ENCODE measurements at regions of chrX and their contacts with region 1.

Region 1: DNA sequence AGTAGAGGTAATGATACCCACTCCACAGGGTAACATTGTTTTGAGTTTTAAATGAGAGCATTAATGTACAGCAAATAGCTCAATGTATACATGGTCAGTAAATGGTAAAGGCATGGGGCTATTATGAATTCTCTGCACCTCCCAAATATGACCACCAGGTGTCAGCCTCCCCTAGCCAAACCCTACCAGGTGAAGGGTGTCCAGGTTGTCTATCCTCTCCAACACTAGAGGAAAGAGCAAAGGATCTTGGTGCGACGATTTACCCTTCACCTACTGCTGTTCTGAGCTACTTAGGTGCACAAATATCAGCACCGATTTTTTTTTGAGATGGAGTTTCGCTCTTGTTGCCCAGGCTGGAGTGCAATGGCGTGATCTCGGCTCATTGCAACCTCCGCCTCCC is 26.5 kb upstream of the XIAP start:
- DNase-seq: peak; percentile 63 to 73
- H3K4me3 ChIP-seq: no peak overlapping the region
- H3K4me3 Mint-ChIP-seq: no peak overlapping the region
- H3K27ac Mint-ChIP-seq: no peak overlapping the region
- H3K4me1 ChIP-seq: no peaks in the 10 kb centered on the region
- H3K4me1 Mint-ChIP-seq: peaks cover 6% of the 10 kb centered on the region
- H3K27me3 ChIP-seq: no peaks in the 10 kb centered on the region
- H3K27me3 Mint-ChIP-seq: no peaks in the 10 kb centered on the region
- CTCF ChIP-seq: peak; percentile 52 to 63

Region 2: GRCh38 chrX:123665197-123665596 is 168.2 kb before region 1 on chrX:
- CTCF ChIA-PET with region 1: no interaction called
- POLR2A ChIA-PET with region 1: no interaction called
- intact Hi-C with region 1: loop called (anchors 5 kb)
- DNase-seq: peak in 1 of 2 experiments; percentile 1
- H3K4me3 ChIP-seq: no peak overlapping the region
- H3K4me3 Mint-ChIP-seq: no peak overlapping the region
- H3K27ac Mint-ChIP-seq: no peak overlapping the region
- H3K4me1 ChIP-seq: no peaks in the 10 kb centered on the region
- H3K4me1 Mint-ChIP-seq: no peaks in the 10 kb centered on the region
- H3K27me3 ChIP-seq: no peaks in the 10 kb centered on the region
- H3K27me3 Mint-ChIP-seq: no peaks in the 10 kb centered on the region
- CTCF ChIP-seq: no peak

Region 3: DNA sequence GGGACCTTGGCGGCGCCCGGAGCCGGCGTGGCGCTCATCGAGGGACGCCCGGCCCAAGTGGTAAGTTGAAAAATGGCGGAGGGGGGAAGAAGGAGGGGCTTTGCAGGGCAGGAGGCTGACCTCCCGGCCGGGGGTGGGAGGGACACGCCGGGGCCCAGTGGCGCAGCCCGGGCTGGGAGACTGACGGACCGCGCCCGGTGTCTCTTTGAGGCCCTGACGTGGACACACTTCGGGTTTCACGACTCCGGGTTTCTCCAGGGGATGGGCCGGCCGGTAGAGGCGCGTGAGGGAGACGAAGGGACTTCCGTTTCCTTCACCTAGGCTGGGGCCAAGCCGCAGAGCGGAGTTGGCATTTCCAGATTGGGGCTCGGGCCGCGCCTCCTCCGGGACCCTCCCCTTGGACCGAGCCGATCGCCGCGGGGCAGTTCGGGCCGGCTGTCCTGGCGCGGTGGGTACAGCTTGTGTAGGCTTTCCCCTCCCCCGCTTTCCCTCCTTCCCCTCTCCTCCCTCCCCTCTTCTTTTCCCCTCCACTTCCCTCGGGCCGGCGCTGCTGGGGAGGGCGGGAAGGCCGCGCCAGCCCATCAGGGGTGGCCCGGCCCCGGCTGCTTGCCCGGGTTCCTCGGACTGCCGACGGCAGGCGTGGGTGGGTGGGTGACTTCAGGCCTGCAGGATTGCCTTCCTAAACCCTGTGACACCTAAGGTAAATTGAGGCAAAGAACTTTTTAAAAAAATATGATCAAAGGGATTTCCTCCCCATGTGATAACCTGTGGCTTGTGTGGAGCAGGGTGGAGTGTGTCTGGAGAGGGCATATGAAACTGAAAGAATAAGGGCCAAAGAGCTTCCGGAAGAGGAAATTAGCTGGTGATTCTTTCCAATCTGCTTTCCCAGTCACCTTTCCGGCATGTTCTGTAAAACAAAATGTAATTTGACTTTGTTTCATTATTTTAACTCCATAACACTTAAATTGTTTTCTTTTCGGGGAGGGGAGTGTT is 26.8 kb after region 1 on chrX and contains the start of gene XIAP:
- CTCF ChIA-PET with region 1: interaction called, 12 read pairs
- POLR2A ChIA-PET with region 1: interaction called, 3 read pairs
- intact Hi-C with region 1: no loop called
- DNase-seq: peak; percentile 91 to 93
- H3K4me3 ChIP-seq: peak within 1 kb of the TSS; percentile 67
- H3K4me3 Mint-ChIP-seq: peak within 1 kb of the TSS; percentile 71
- H3K27ac Mint-ChIP-seq: peak within 1 kb of the TSS; percentile 50
- H3K4me1 ChIP-seq: 0 out of 2 replicates have a peak, but pooled peaks cover 3% of the 10 kb centered on the region
- H3K4me1 Mint-ChIP-seq: peaks cover 14% of the 10 kb centered on the region
- H3K27me3 ChIP-seq: no peaks in the 10 kb centered on the region
- H3K27me3 Mint-ChIP-seq: no peaks in the 10 kb centered on the region
- CTCF ChIP-seq: no peak
- total RNA-seq, gene XIAP: 21.3 and 25.9 TPM in 2 replicates

Region 4: GRCh38 chrX:123960042-123960611 is 126.7 kb after region 1 on chrX:
- CTCF ChIA-PET with region 1: interaction called, 5 read pairs
- POLR2A ChIA-PET with region 1: interaction called, 4 read pairs
- intact Hi-C with region 1: loop called (anchors 1 kb)
- DNase-seq: peak; percentile 87 to 90
- H3K4me3 ChIP-seq: peak overlapping the region; percentile 78
- H3K4me3 Mint-ChIP-seq: peak overlapping the region; percentile 98
- H3K27ac Mint-ChIP-seq: peak overlapping the region; percentile 100
- H3K4me1 ChIP-seq: peaks cover 6% of the 10 kb centered on the region; the same call in 1 of the 2 replicates
- H3K4me1 Mint-ChIP-seq: peaks cover 8% of the 10 kb centered on the region
- H3K27me3 ChIP-seq: no peaks in the 10 kb centered on the region
- H3K27me3 Mint-ChIP-seq: no peaks in the 10 kb centered on the region
- CTCF ChIP-seq: peak; percentile 77 to 96

Region 5: GRCh38 chrX:124045109-124045508 is 211.7 kb after region 1 on chrX:
- CTCF ChIA-PET with region 1: no interaction called
- POLR2A ChIA-PET with region 1: no interaction called
- intact Hi-C with region 1: loop called (anchors 10 kb)
- DNase-seq: no peak
- H3K4me3 ChIP-seq: no peak overlapping the region
- H3K4me3 Mint-ChIP-seq: no peak overlapping the region
- H3K27ac Mint-ChIP-seq: no peak overlapping the region
- H3K4me1 ChIP-seq: no peaks in the 10 kb centered on the region
- H3K4me1 Mint-ChIP-seq: no peaks in the 10 kb centered on the region
- H3K27me3 ChIP-seq: no peaks in the 10 kb centered on the region
- H3K27me3 Mint-ChIP-seq: no peaks in the 10 kb centered on the region
- CTCF ChIP-seq: no peak